ENCODE measurements at regions of chr11 and their contacts with region 1.

Region 1: DNA sequence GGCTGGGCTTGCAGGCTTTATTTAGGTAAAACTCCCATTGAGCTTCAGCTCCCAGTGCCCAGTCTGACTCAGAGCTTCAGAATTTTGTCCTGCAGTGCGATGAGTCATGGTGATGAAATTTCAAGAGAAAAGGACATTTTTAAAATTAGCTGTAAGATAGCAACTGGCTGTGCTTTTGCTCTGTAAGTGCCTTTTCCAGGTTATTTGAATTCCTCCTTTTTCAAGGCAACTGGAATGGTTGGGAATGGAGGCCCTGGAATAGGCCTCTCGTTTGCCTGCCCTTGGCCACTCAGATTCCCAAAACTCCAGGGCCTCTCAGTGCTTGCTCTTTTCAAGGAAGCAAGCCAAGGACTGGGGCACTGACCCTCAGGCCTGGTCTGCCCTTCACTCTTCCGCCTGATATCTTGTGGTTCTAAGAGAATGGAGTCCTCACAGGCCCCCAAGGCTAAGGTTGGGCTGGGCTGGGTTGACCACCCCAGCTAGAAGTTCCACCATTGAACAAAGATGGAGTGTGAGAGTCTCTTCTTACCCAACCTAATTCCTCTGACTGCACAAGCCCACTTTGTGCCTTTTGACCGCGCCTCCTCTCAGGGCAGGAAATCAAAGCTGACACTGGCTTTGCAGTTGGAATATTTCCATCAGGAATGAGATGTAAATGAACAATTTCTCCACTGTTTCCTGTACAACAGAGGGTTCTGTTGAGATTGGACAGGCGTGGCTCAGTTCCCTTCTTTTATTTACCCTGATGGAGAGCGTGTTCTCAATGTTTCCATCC is 59.4 kb upstream of the PRSS23 start:
- DNase-seq: peak; percentile 78

Region 2: GRCh38 chr11:86632499-86633269 is 108.2 kb before region 1 on chr11:
- intact Hi-C with region 1: loop called in 1 of 2 experiments (anchors 10 kb)
- DNase-seq: peak; percentile 83

Region 3: DNA sequence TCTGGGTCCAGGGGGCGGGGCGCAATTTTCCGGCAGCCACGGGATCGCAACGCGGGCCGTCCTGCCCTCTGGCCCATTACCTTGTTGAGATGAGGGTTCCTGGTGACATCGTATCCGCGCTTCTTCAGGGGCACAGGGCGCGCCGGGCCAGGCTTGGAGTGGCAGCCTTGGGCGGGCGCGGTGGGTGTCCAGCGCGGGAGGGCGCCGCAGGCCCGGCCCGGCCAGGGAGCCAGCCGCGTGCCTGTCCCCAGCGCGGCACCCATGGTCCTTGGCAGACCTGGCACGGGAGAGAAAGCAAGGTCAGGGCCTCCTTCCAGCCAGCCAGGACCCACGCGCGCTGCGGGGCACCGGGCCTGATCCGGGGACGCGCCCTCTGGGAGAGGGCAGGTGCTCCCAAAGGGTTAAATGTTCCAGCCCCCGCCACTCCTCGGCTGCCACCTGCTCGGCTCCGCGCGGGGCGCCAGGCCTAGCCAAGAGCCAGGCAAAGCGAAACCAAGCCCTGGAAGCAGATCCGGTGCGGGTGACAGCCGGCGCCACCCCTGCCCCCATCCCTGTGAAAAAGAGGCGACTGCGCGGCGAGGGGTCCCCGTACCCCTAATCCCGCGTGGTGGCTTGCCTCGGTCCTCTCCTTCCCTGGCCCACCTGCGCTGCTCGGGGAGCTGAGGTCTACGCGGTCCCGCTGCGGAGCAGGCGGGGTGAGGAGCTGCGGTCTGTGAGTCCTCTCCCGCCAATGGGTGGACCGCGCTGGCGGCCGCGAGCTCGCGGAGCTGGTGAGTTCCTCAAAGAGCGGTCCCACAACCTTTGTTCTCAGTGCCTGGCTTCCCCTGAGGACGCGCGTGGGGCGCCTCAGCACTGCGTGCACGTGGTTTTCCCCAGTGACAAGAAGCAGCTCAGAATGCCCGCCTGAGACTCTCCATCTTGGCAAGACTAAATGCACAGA is 68.9 kb before region 1 on chr11 and contains the start of gene ME3:
- intact Hi-C with region 1: loop called in 1 of 2 experiments (anchors 5 kb)
- DNase-seq: peak; percentile 94
- total RNA-seq, gene ME3: 19.3 to 25.7 TPM

Region 4: GRCh38 chr11:86802601-86803051 is 61.7 kb after region 1 on chr11:
- intact Hi-C with region 1: loop called in 1 of 2 experiments (anchors 5 kb)
- DNase-seq: no peak

Measured in posterior vena cava (tissue), 2 donors.